AG04449 (cell line): ENCODE measurements at regions of chr3 and their contacts with region 1.

Region 1: DNA sequence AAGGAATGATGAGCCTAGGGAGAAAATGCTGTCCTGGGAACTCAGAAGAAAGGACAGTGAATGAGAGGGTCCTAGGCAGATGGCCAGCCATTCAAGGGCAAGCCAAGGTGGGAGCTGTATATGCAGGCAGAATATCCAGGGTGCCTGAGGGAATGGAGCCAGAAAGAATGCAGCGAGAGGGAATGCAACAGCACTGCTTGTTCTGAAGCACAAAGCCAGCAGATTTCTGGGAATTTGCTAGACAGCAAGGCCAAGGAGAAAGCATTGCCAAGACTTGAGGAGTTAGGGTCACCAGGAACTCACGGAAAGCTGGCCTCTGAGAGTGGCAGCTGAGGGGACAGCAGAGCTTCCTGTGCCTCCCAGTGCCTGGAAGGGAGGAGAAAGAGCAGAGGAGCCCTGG is 200.6 kb downstream of the MYRIP start:
- DNase-seq: no peak
- H3K4me3 ChIP-seq: no peak overlapping the region
- CTCF ChIP-seq: no peak

Region 2: GRCh38 chr3:39892068-39892467 is 117.9 kb before region 1 on chr3:
- CTCF ChIA-PET with region 1: no interaction called
- POLR2A ChIA-PET with region 1: no interaction called
- DNase-seq: no peak
- H3K4me3 ChIP-seq: no peak overlapping the region
- CTCF ChIP-seq: no peak

Region 3: GRCh38 chr3:39990532-39990931 is 19.5 kb before region 1 on chr3:
- CTCF ChIA-PET with region 1: interaction called, 11 read pairs
- POLR2A ChIA-PET with region 1: no interaction called
- DNase-seq: no peak
- H3K4me3 ChIP-seq: no peak overlapping the region
- CTCF ChIP-seq: peak; percentile 50